ENCODE measurements at regions of chr5 and their contacts with region 1.

Region 1: GRCh38 chr5:152532714-152533113 is 127.6 kb upstream of the NMUR2 start:
- DNase-seq: peak in 1 of 2 experiments; percentile 43
- H3K4me3 ChIP-seq: no peak overlapping the region
- H3K4me3 Mint-ChIP-seq: no peak overlapping the region
- H3K27ac Mint-ChIP-seq: no peak overlapping the region
- H3K4me1 ChIP-seq: no peaks in the 10 kb centered on the region
- H3K4me1 Mint-ChIP-seq: no peaks in the 10 kb centered on the region
- H3K27me3 ChIP-seq: no peaks in the 10 kb centered on the region
- H3K27me3 Mint-ChIP-seq: peaks cover 19% of the 10 kb centered on the region
- CTCF ChIP-seq: peak; percentile 56 to 67

Region 2: DNA sequence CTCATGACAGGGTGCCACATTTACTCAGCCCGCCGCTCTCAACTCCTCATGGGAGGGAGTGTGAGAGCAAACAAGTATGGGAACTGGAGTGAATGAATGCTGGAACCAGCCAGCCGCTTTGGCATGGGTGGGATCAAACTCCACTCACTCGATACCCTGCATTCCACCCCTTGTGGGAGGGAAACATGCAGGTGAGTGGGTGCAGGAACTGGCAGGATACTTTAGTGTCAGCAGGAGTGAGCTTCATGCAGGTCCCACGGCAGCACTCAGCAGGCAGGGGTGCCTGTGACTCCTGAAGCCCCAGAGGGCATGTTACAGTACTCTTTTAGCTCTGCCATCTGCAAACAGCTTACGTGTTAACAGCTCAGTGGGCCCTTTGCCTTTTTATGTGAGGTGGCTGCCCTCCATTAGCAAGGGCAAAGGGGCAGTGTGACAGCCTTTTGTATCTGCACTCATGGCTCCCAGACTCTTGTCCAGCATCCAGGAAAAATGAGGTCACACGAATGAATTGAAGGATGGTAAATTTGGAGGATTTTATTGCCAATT is 305.6 kb after region 1 on chr5:
- CTCF ChIA-PET with region 1: no interaction called
- POLR2A ChIA-PET with region 1: no interaction called
- intact Hi-C with region 1: loop called (anchors 10 kb)
- DNase-seq: no peak
- H3K4me3 ChIP-seq: no peak overlapping the region
- H3K4me3 Mint-ChIP-seq: no peak overlapping the region
- H3K27ac Mint-ChIP-seq: no peak overlapping the region
- H3K4me1 ChIP-seq: no peaks in the 10 kb centered on the region
- H3K4me1 Mint-ChIP-seq: no peaks in the 10 kb centered on the region
- H3K27me3 ChIP-seq: no peaks in the 10 kb centered on the region
- H3K27me3 Mint-ChIP-seq: peaks cover 6% of the 10 kb centered on the region
- CTCF ChIP-seq: no peak

Region 3: GRCh38 chr5:153147891-153148623 is 615.3 kb after region 1 on chr5:
- CTCF ChIA-PET with region 1: no interaction called
- POLR2A ChIA-PET with region 1: no interaction called
- intact Hi-C with region 1: loop called (anchors 1 kb)
- DNase-seq: peak; percentile 38 to 45
- H3K4me3 ChIP-seq: no peak overlapping the region
- H3K4me3 Mint-ChIP-seq: no peak overlapping the region
- H3K27ac Mint-ChIP-seq: no peak overlapping the region
- H3K4me1 ChIP-seq: no peaks in the 10 kb centered on the region
- H3K4me1 Mint-ChIP-seq: no peaks in the 10 kb centered on the region
- H3K27me3 ChIP-seq: no peaks in the 10 kb centered on the region
- H3K27me3 Mint-ChIP-seq: peaks cover 3% of the 10 kb centered on the region
- CTCF ChIP-seq: peak; percentile 48 to 59

Region 4: GRCh38 chr5:153496835-153497234 is 964.1 kb after region 1 on chr5:
- CTCF ChIA-PET with region 1: no interaction called
- POLR2A ChIA-PET with region 1: no interaction called
- intact Hi-C with region 1: loop called (anchors 2 kb)
- DNase-seq: peak in 1 of 2 experiments; percentile 36
- H3K4me3 ChIP-seq: no peak overlapping the region
- H3K4me3 Mint-ChIP-seq: no peak overlapping the region
- H3K27ac Mint-ChIP-seq: no peak overlapping the region
- H3K4me1 ChIP-seq: no peaks in the 10 kb centered on the region
- H3K4me1 Mint-ChIP-seq: peaks cover 2% of the 10 kb centered on the region
- H3K27me3 ChIP-seq: peaks cover 1% of the 10 kb centered on the region; the same call in 1 of the 2 replicates
- H3K27me3 Mint-ChIP-seq: peaks cover 8% of the 10 kb centered on the region
- CTCF ChIP-seq: peak; percentile 54 to 83

Region 5: GRCh38 chr5:154179846-154180710 is 1647.4 kb after region 1 on chr5:
- CTCF ChIA-PET with region 1: no interaction called
- POLR2A ChIA-PET with region 1: no interaction called
- intact Hi-C with region 1: loop called (anchors 5 kb)
- DNase-seq: peak; percentile 45 to 53
- H3K4me3 ChIP-seq: no peak overlapping the region
- H3K4me3 Mint-ChIP-seq: no peak overlapping the region
- H3K27ac Mint-ChIP-seq: no peak overlapping the region
- H3K4me1 ChIP-seq: no peaks in the 10 kb centered on the region
- H3K4me1 Mint-ChIP-seq: no peaks in the 10 kb centered on the region
- H3K27me3 ChIP-seq: no peaks in the 10 kb centered on the region
- H3K27me3 Mint-ChIP-seq: peaks cover 9% of the 10 kb centered on the region
- CTCF ChIP-seq: peak; percentile 64 to 86